ENCODE measurements at regions of chr15 and their contacts with region 1.

Region 1: GRCh38 chr15:64731012-64731806 is 44.2 kb downstream of the RBPMS2 start:
- DNase-seq: peak; percentile 77
- H3K4me3 ChIP-seq: no peak overlapping the region
- H3K27ac ChIP-seq: no peak overlapping the region
- H3K4me1 ChIP-seq: no peaks in the 10 kb centered on the region
- H3K27me3 ChIP-seq: no peaks in the 10 kb centered on the region
- CTCF ChIP-seq: peak; percentile 92

Region 2: GRCh38 chr15:64369078-64369607 is 362.1 kb before region 1 on chr15:
- CTCF ChIA-PET with region 1: interaction called, 12 read pairs
- POLR2A ChIA-PET with region 1: no interaction called
- intact Hi-C with region 1: no loop called
- DNase-seq: no peak
- H3K4me3 ChIP-seq: no peak overlapping the region
- H3K27ac ChIP-seq: no peak overlapping the region
- H3K4me1 ChIP-seq: no peaks in the 10 kb centered on the region
- H3K27me3 ChIP-seq: no peaks in the 10 kb centered on the region
- CTCF ChIP-seq: no peak

Region 3: GRCh38 chr15:64681424-64682024 is 49.7 kb before region 1 on chr15:
- CTCF ChIA-PET with region 1: interaction called, 19 read pairs
- POLR2A ChIA-PET with region 1: no interaction called
- intact Hi-C with region 1: loop called (anchors 1 kb)
- DNase-seq: peak; percentile 81
- H3K4me3 ChIP-seq: no peak overlapping the region
- H3K27ac ChIP-seq: no peak overlapping the region
- H3K4me1 ChIP-seq: no peaks in the 10 kb centered on the region
- H3K27me3 ChIP-seq: no peaks in the 10 kb centered on the region
- CTCF ChIP-seq: peak; percentile 65

Region 4: DNA sequence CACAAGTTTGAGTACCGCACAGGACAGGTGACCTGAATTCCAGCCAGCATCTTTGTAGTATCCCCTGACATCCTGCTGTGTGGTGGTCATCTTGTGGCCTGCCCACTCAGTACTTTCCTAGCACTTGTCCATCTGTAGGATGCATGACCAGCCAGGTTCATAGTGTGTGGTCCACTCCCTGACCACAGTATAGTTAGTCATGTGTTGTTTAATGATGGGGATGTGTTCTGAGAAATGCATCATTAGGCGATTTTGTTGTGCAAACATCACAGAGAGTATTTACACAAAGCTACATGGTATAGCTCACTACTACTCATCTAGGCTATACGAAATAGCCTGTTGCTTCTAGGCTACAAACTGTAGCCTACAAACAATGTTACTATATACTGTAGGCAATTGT is 61.1 kb after region 1 on chr15:
- CTCF ChIA-PET with region 1: interaction called, 13 read pairs
- POLR2A ChIA-PET with region 1: no interaction called
- intact Hi-C with region 1: no loop called
- DNase-seq: no peak
- H3K4me3 ChIP-seq: no peak overlapping the region
- H3K27ac ChIP-seq: no peak overlapping the region
- H3K4me1 ChIP-seq: no peaks in the 10 kb centered on the region
- H3K27me3 ChIP-seq: no peaks in the 10 kb centered on the region
- CTCF ChIP-seq: no peak

Region 5: GRCh38 chr15:64905119-64905831 is 174.1 kb after region 1 on chr15:
- CTCF ChIA-PET with region 1: no interaction called
- POLR2A ChIA-PET with region 1: no interaction called
- intact Hi-C with region 1: loop called (anchors 5 kb)
- DNase-seq: peak; percentile 74
- H3K4me3 ChIP-seq: peak overlapping the region; percentile 24
- H3K27ac ChIP-seq: no peak overlapping the region
- H3K4me1 ChIP-seq: no peaks in the 10 kb centered on the region
- H3K27me3 ChIP-seq: no peaks in the 10 kb centered on the region
- CTCF ChIP-seq: peak; percentile 63

Region 6: DNA sequence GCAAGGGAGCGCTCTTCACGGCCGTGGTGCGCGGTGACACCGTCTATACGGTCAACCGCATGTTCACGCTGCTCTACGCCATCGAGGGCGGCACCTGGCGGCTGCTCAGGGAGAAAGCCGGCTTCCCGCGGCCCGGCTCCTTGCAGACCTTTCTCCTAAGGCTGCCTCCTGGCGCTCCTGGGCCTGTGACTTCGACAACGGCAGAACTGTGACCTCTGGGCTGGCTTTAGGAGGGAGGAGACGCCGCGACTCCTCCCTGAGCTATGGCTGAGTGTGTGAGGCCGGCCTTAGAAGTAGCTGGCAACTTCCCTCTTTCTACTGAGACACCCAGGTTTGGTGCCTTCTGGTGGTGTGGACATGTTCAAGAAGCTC is 346.8 kb after region 1 on chr15:
- CTCF ChIA-PET with region 1: interaction called, 21 read pairs
- POLR2A ChIA-PET with region 1: no interaction called
- intact Hi-C with region 1: no loop called
- DNase-seq: peak; percentile 70
- H3K4me3 ChIP-seq: no peak overlapping the region
- H3K27ac ChIP-seq: no peak overlapping the region
- H3K4me1 ChIP-seq: no peaks in the 10 kb centered on the region
- H3K27me3 ChIP-seq: no peaks in the 10 kb centered on the region
- CTCF ChIP-seq: peak; percentile 79

Region 7: GRCh38 chr15:65196637-65197338 is 465.6 kb after region 1 on chr15:
- CTCF ChIA-PET with region 1: no interaction called
- POLR2A ChIA-PET with region 1: no interaction called
- intact Hi-C with region 1: no loop called
- DNase-seq: no peak
- H3K4me3 ChIP-seq: no peak overlapping the region
- H3K27ac ChIP-seq: no peak overlapping the region
- H3K4me1 ChIP-seq: no peaks in the 10 kb centered on the region
- H3K27me3 ChIP-seq: no peaks in the 10 kb centered on the region
- CTCF ChIP-seq: no peak

Measured in A673 (cell line).